ENCODE measurements at regions of chr2 and their contacts with region 1.

Region 1: DNA sequence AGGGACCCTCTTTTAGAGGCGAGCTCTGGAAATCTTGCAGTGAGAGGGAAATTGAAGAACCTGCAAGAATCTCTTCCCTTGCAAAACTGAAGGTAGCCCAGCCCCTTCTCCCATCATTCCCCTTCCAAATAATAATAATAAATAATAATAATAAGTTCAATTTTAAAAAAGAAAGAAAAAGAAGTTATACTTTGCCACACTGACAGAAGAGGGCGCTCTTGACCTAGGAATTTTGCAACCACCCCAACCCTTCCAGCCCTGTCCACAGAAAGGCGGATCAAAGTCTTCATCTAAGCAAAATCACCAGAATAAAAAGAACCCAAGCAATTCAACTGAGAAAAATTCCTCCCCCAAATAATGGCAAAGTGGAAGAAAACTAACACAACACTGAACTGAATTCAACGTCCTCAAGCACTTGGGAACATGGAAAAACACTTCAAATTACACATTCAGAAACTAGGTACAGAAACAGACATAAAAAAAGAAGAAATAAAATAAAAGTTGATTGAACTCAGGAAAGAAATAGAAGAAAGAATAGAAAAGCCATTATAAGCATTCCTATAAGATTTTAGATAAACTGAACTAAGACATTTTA is 98.9 kb upstream of the GLS start:
- DNase-seq: peak; percentile 63
- H3K4me3 ChIP-seq: no peak overlapping the region
- H3K27ac ChIP-seq: no peak overlapping the region
- H3K4me1 ChIP-seq: peaks cover 0 to 22% (median 3%) of the 10 kb centered on the region in 4 donors
- H3K27me3 ChIP-seq: no peaks in the 10 kb centered on the region
- CTCF ChIP-seq: peak; percentile 61 to 78 (median 67)
- EP300 ChIP-seq: no peak
- POLR2A ChIP-seq: no peak

Region 2: DNA sequence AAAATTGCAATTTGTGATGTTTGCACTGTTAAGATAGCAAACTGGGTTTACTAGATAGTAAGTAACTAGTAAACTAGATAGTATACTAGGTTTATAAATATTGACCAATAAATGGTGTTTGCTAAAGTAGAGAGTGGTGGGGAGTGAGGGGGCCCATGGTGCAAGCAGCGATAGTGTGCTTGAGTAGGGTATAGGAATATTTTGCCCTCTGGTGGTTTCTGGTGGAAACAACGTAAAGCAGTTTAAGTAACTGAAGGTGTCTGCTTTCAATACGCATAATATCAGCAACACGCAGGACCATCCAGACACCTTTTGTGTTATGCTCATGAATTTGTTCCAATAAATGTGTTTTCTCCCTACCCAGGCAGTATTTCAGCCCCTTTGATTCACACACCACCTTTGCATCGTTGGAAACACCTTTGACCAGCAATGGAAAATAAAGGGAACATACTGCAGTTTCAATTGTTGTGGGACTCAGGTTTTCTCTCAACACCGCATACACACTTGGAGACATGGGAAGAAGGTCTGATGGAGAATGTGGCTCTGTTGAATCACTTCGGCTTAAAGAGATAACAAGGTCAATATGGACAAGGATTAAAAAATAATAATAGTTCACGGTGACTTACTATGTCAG is 248.9 kb after region 1 on chr2:
- in situ Hi-C with region 1: no loop called
- intact Hi-C with region 1: loop called (anchors 5 kb)
- DNase-seq: no peak
- H3K4me3 ChIP-seq: no peak overlapping the region
- H3K27ac ChIP-seq: no peak overlapping the region
- H3K4me1 ChIP-seq: peaks cover 0 to 14% (median 0%) of the 10 kb centered on the region in 4 donors
- H3K27me3 ChIP-seq: no peaks in the 10 kb centered on the region
- CTCF ChIP-seq: peak; percentile 61 to 71 (median 64)
- EP300 ChIP-seq: no peak
- POLR2A ChIP-seq: no peak

Region 3: DNA sequence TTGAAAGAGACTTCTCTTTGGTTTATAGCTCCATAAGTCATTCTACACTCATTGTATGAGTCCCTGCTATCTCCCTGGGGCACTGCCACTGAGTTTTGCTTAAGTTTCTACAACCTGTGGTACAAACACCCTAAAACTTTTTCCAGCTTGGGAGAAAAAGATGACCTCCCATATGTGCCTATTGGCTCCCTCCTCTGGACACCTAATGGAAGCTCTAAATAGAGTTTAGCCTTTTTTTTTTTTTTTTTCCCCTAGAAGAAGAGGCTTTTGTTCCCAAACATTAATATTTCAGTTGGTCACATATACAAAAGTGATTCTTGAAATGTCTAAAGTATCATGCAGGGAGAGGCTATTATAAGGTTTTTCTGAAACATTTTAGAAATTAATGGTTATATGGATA is 1960.2 kb after region 1 on chr2:
- in situ Hi-C with region 1: no loop called
- intact Hi-C with region 1: no loop called
- DNase-seq: no peak
- H3K4me3 ChIP-seq: no peak overlapping the region
- H3K27ac ChIP-seq: no peak overlapping the region
- H3K4me1 ChIP-seq: no peaks in the 10 kb centered on the region
- H3K27me3 ChIP-seq: no peaks in the 10 kb centered on the region
- CTCF ChIP-seq: no peak
- EP300 ChIP-seq: no peak
- POLR2A ChIP-seq: no peak

Measured in transverse colon (tissue), 4 donors.